ENCODE measurements at regions of chr10 and their contacts with region 1.

Region 1: GRCh38 chr10:49426592-49427360 is 30.9 kb upstream of the DRGX start:
- DNase-seq: no peak
- H3K4me3 ChIP-seq: no peak overlapping the region
- H3K27ac ChIP-seq: no peak overlapping the region
- H3K4me1 ChIP-seq: no peaks in the 10 kb centered on the region
- H3K27me3 ChIP-seq: no peaks in the 10 kb centered on the region
- CTCF ChIP-seq: no peak

Region 2: DNA sequence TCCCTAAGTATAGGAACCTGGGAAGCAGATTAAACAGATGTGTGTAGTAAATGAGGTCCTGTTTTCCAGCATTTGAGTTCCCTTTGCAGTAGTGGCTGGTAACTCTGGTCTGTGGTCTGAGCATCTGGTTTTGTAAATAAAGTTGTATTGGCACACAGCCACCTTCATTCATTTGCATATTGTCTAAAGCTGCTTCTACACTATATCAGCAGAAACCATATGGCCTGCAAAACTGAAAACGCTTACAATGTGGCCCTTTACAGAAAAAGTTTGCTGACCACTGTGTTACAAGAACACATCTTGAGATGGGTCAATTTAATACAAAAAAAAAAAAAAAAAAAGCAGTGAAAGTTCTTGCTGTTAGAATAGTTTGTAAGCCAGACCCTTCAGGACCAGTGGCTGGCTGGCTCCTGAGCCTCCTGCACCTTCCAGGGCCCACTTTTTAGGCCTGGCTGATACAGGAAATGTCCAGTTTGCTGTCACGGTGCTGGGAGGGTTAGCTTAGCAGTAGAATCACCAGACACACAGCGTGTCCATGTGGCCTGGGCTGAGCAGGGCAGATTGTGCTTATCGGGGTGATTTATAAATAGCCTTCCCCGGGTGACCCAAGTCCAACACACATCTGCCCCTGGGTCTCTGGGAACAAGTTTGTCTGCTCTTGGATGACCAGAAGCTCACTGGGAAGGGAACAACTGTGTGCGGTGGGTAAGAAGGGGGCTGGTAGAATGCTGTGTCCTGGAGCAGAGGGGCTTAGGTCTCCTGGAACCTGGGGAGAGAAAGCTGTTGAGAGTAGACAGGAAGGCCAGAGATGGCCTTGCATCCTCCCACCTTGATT is 126.4 kb before region 1 on chr10:
- CTCF ChIA-PET with region 1: no interaction called
- dilution Hi-C with region 1: loop called (anchors 10 kb)
- in situ Hi-C with region 1: no loop called
- intact Hi-C with region 1: no loop called
- DNase-seq: no peak
- H3K4me3 ChIP-seq: no peak overlapping the region
- H3K27ac ChIP-seq: no peak overlapping the region
- H3K4me1 ChIP-seq: no peaks in the 10 kb centered on the region
- H3K27me3 ChIP-seq: peaks cover 4% of the 10 kb centered on the region
- CTCF ChIP-seq: no peak